Activated CD8-positive, alpha-beta memory T cell treated with anti-CD3 and anti-CD28 coated beads, Interleukin-2, amount 10 ng/mL, durations not matched to agents 7 days and 5 days (primary cell): ENCODE measurements at regions of chr1 and their contacts with region 1.

Region 1: DNA sequence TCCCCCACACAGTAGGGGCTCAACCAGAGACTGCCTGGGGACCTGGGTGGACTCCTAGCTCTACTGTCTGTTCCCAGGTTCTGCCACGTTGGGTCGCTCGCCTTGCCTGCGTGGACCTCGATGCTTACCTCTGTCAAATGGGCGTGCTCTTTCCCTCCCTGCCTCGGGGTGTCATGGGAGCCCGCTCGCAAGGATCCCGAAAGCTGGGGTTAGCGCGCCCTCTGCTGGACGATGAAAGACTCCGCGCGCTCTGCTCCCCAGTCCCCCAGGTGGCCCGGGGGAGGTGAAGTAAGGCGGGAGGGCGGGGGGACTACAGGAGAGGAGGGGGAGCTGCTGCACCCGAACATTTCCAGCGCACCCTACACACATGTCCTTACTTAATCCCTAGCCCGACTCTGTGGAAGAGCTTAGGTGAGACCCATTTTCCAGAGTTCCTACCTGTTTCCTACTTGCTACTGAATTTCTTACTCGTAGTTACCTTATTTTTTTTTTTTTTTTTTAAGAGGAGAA is 2.3 kb upstream of the BSND start:
- DNase-seq: peak; percentile 91
- ATAC-seq: peak; percentile 80
- H3K4me3 Mint-ChIP-seq: peak overlapping the region; percentile 60
- H3K27ac Mint-ChIP-seq: peak overlapping the region; percentile 90
- H3K4me1 Mint-ChIP-seq: peaks cover 42% of the 10 kb centered on the region
- H3K27me3 Mint-ChIP-seq: peaks cover 38% of the 10 kb centered on the region

Region 2: GRCh38 chr1:54886724-54887664 is 109.4 kb before region 1 on chr1 and contains the start of gene DHCR24:
- CTCF ChIA-PET with region 1: interaction called, 10 read pairs
- DNase-seq: peak; percentile 87
- ATAC-seq: peak; percentile 98
- H3K4me3 Mint-ChIP-seq: peak within 1 kb of the TSS; percentile 99
- H3K27ac Mint-ChIP-seq: peak within 1 kb of the TSS; percentile 79
- H3K4me1 Mint-ChIP-seq: peaks cover 51% of the 10 kb centered on the region
- H3K27me3 Mint-ChIP-seq: peaks cover 26% of the 10 kb centered on the region
- total RNA-seq, gene DHCR24: 121 to 187 TPM

Region 3: DNA sequence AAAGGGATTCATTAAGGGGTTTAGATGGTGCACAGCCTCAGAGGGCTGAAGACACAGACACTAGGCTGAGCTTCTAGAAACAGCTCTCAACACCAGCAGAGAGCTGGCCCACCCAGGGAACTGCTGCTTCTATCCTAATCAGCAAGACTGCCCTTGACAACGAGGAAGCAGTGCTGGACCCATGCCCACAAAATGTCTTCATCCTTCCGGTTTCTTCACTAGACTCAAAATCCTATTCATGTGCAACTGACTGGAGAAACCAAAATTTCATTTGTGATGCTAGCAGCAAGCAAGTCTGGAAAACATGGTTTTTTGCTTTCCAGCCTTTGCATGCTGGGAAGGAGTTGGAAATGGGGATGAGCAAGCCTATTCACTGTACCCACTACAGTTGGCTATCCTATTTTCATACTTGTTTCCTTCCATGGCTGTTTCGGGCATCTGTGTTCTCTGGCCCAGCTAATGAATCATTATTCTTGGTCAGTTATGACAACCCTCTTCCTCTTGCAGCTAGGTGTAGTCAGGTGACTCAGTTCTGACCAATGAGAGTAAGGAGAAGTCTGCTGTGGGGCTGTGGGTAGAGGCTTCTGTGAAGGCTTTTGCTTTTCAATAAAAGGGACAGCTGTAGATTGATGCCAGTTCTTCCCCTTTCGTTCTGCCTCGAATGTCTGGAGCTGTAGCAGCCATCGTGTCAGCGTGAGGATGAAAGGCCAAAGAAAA is 30.6 kb before region 1 on chr1:
- CTCF ChIA-PET with region 1: interaction called, 19 read pairs
- DNase-seq: no peak
- ATAC-seq: peak; percentile 75
- H3K4me3 Mint-ChIP-seq: no peak overlapping the region
- H3K27ac Mint-ChIP-seq: peak overlapping the region; percentile 30
- H3K4me1 Mint-ChIP-seq: peaks cover 33% of the 10 kb centered on the region
- H3K27me3 Mint-ChIP-seq: peaks cover 21% of the 10 kb centered on the region

Region 4: DNA sequence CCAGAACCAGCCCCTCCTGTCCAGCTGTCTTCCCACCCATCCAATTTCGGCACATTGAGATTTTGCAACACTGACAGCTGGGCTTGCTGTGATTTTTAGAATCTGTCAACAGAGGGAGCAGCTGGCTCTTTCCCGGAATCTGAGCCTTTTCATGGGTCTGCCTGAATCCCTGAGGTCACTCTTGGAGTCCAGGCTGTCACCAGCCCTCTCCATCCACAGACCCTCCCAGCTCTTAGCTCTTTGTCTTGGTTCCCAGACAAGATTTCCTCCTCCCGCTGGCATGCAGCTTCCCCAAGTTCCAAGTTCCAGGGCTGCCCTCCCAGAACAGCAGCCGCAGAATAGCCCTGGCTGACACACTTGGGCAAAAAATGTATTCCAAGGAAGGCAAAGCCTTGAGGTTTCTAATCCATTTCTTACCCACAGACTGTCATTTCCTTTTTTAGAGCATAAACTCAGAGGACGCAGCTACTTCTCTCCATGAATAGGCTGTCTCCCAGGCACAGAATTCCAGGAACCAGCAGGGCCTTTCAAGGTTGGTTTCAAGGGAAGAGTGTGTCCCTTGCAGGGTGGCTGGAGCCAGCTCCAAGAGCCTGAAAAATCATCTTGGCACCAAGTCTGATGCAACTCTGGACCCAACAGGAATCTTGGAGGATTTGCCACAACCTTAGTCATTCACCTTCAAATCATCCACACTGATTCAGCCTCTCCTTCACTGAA is 23.1 kb before region 1 on chr1:
- CTCF ChIA-PET with region 1: interaction called, 13 read pairs
- DNase-seq: no peak
- ATAC-seq: no peak
- H3K4me3 Mint-ChIP-seq: no peak overlapping the region
- H3K27ac Mint-ChIP-seq: no peak overlapping the region
- H3K4me1 Mint-ChIP-seq: peaks cover 13% of the 10 kb centered on the region
- H3K27me3 Mint-ChIP-seq: peaks cover 53% of the 10 kb centered on the region

Region 5: DNA sequence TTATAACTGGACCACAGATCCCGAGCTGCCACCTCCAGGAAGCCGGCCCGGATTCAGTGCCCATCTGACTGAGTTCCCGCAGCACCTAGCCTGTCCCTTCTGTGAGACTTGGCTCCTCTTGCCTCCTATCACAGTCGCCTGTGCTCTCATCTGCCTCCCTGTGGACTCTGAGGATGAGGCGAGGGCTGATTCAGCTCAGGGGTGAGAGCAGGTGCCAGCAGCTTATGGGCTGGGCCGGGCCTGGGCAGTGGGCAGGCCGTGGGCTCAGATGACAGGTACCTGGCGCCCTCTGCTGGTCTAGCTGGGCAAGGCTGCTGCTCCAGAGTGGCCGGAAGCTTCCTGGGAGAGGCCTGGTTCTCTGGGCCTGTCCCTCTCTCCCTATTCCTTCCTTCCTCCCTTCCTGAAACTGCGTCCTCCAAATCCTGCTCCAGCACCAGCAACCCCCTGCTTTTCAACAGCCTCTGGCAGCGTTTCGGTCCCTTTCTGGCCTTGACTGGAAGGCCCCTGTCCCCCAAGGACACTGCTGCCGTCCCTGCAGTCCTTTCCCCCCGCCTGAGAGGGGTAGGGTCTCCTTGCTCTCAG is 25.6 kb after region 1 on chr1:
- CTCF ChIA-PET with region 1: interaction called, 22 read pairs
- DNase-seq: peak; percentile 80
- ATAC-seq: peak; percentile 98
- H3K4me3 Mint-ChIP-seq: no peak overlapping the region
- H3K27ac Mint-ChIP-seq: no peak overlapping the region
- H3K4me1 Mint-ChIP-seq: peaks cover 3% of the 10 kb centered on the region
- H3K27me3 Mint-ChIP-seq: peaks cover 15% of the 10 kb centered on the region

Region 6: DNA sequence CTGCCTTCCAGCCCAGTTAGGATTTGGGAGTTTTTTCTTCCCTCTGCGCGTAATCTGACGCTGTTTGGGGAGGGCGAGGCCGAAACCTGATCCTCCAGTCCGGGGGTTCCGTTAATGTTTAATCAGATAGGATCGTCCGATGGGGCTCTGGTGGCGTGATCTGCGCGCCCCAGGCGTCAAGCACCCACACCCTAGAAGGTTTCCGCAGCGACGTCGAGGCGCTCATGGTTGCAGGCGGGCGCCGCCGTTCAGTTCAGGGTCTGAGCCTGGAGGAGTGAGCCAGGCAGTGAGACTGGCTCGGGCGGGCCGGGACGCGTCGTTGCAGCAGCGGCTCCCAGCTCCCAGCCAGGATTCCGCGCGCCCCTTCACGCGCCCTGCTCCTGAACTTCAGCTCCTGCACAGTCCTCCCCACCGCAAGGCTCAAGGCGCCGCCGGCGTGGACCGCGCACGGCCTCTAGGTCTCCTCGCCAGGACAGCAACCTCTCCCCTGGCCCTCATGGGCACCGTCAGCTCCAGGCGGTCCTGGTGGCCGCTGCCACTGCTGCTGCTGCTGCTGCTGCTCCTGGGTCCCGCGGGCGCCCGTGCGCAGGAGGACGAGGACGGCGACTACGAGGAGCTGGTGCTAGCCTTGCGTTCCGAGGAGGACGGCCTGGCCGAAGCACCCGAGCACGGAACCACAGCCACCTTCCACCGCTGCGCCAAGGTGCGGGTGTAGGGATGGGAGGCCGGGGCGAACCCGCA is 43.1 kb after region 1 on chr1 and contains the start of gene PCSK9:
- CTCF ChIA-PET with region 1: no interaction called
- DNase-seq: no peak
- ATAC-seq: peak; percentile 27
- H3K4me3 Mint-ChIP-seq: no peak within 1 kb of the TSS
- H3K27ac Mint-ChIP-seq: no peak within 1 kb of the TSS
- H3K4me1 Mint-ChIP-seq: no peaks in the 10 kb centered on the region
- H3K27me3 Mint-ChIP-seq: peaks cover 77% of the 10 kb centered on the region
- total RNA-seq, gene PCSK9: 0.07 TPM in 1 of 2 experiments, not detected in the other